IMR-90 (cell line): ENCODE measurements at regions of chr22 and their contacts with region 1.

Region 1: GRCh38 chr22:33000342-33001280 is 57.6 kb downstream of the SYN3 start:
- DNase-seq: peak; percentile 32
- ATAC-seq: peak; percentile 99
- H3K4me3 ChIP-seq: no peak overlapping the region
- H3K27ac ChIP-seq: no peak overlapping the region
- H3K4me1 ChIP-seq: no peaks in the 10 kb centered on the region
- H3K27me3 ChIP-seq: peaks cover 20% of the 10 kb centered on the region
- CTCF ChIP-seq: peak; percentile 89
- POLR2A ChIP-seq: no peak
- RAD21 ChIP-seq: peak; percentile 88

Region 2: GRCh38 chr22:31977141-31977841 is 1023.3 kb before region 1 on chr22:
- CTCF ChIA-PET with region 1: interaction called, 5 read pairs
- POLR2A ChIA-PET with region 1: no interaction called
- dilution Hi-C with region 1: no loop called
- in situ Hi-C with region 1: no loop called
- intact Hi-C with region 1: loop called (anchors 2 kb)
- DNase-seq: peak; percentile 54
- ATAC-seq: peak; percentile 95
- H3K4me3 ChIP-seq: no peak overlapping the region
- H3K27ac ChIP-seq: no peak overlapping the region
- H3K4me1 ChIP-seq: no peaks in the 10 kb centered on the region
- H3K27me3 ChIP-seq: peaks cover 2% of the 10 kb centered on the region; the same call in 1 of the 2 replicates
- CTCF ChIP-seq: peak; percentile 78
- POLR2A ChIP-seq: 0 out of 2 replicates have a peak, but pooled peaks have one; percentile 38
- RAD21 ChIP-seq: peak; percentile 88

Region 3: GRCh38 chr22:32103658-32104315 is 896.8 kb before region 1 on chr22:
- CTCF ChIA-PET with region 1: no interaction called
- POLR2A ChIA-PET with region 1: no interaction called
- dilution Hi-C with region 1: no loop called
- in situ Hi-C with region 1: no loop called
- intact Hi-C with region 1: loop called (anchors 5 kb)
- DNase-seq: peak; percentile 3
- ATAC-seq: no peak
- H3K4me3 ChIP-seq: no peak overlapping the region
- H3K27ac ChIP-seq: no peak overlapping the region
- H3K4me1 ChIP-seq: no peaks in the 10 kb centered on the region
- H3K27me3 ChIP-seq: 0 out of 2 replicates have a peak, but pooled peaks cover 3% of the 10 kb centered on the region
- CTCF ChIP-seq: peak; percentile 37
- POLR2A ChIP-seq: no peak
- RAD21 ChIP-seq: peak; percentile 47

Region 4: DNA sequence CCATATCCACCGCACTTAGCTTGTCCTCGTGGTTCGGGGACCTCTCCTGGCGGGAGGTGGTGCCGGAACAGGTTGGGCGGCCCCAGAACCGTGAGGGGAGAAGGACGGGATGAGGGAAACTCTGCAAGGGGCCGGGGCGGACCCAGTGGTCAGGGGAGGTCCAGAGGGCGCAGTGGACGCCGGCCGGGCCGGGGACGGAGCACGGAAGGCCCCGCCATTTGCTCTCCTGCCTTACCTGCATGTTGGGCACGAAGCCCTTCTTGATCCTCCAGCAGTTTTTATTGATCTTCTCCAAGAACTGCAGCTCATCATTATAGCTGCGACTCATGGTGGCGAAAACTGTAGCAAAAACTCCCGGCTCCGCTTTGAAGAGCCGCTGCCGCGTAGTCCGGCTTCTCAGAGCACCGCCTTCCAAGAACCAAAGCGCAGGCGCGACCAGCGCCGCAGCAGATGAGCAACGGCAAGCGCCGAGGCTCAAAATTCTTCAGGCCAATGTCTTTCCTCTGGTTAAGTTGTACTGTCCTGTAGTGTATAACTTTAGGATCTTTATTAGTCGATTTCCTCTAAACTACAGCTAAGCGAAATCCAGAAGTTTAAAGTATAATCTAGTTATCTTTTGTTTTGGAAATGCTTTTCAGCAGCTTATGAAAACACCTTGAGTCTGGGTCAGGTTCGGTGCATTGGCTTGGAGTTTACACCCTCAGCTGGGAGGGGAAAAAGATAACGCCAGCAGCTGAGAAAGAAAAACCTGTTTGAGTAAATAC is 588.6 kb before region 1 on chr22 and contains the start of gene RTCB:
- CTCF ChIA-PET with region 1: no interaction called
- POLR2A ChIA-PET with region 1: no interaction called
- dilution Hi-C with region 1: no loop called
- in situ Hi-C with region 1: no loop called
- intact Hi-C with region 1: loop called (anchors 2 kb)
- DNase-seq: peak; percentile 93
- ATAC-seq: peak; percentile 94
- H3K4me3 ChIP-seq: peak within 1 kb of the TSS; percentile 78
- H3K27ac ChIP-seq: peak within 1 kb of the TSS; percentile 57
- H3K4me1 ChIP-seq: peaks cover 2% of the 10 kb centered on the region; the same call in 1 of the 2 replicates
- H3K27me3 ChIP-seq: no peaks in the 10 kb centered on the region; the same call in none of the 2 replicates
- CTCF ChIP-seq: no peak
- POLR2A ChIP-seq: peak; percentile 48; the same call in 1 of the 2 replicates
- RAD21 ChIP-seq: no peak
- total RNA-seq, gene RTCB: 213 and 240 TPM in 2 replicates

Region 5: DNA sequence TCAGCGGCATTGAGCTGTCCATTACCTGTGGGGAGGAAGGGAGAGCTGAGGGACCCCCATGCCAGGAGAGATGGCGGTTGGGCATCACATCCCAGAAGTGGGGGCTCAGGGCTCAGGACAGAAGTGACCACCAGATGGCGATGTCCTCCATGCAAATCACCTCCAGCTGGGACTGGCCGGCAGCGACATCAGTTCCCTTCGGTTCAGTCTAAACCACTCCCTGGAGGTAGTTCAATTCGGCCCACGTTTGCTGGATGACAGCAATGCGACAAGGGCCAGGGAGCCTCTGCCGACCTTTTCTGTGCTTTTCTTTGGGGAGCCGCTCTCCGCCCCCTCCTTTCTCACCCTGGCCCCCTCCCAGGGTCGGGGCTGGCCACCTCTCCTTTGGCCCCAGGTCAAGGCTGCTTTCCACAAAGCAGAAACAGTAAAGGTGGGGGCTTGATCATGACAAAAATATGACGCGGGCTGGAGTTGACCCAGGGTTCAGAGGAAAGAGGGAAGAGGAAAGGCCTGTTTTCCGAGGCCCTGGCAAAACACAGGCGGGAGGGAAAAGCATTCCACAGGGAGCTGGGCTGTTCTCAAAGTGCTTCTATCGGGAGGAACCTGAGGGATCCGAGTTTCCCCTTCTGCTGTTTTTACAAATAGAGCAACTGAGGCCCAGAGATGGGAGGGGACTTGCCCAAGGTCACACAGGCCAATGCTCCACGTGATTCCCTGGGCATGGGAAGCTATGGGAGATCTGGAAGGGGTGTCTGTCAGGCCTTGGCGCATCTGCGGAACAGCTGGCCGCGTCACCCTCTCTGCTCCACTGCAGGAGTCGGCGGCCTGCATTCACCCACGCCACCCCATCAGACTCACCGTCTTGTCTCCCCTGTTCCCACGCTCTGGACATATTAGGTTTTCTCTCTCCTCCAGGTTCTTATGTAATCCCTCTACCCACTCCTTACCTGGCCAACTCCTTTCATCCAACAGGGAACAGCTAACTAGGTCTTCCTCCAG is 471.3 kb before region 1 on chr22:
- CTCF ChIA-PET with region 1: no interaction called
- POLR2A ChIA-PET with region 1: no interaction called
- dilution Hi-C with region 1: no loop called
- in situ Hi-C with region 1: no loop called
- intact Hi-C with region 1: loop called (anchors 1 kb)
- DNase-seq: peak; percentile 86
- ATAC-seq: peak; percentile 78
- H3K4me3 ChIP-seq: no peak overlapping the region
- H3K27ac ChIP-seq: peak overlapping the region; percentile 1; the same call in 1 of the 2 replicates
- H3K4me1 ChIP-seq: peaks cover 23% of the 10 kb centered on the region
- H3K27me3 ChIP-seq: no peaks in the 10 kb centered on the region
- CTCF ChIP-seq: peak; percentile 95
- POLR2A ChIP-seq: peak; percentile 67
- RAD21 ChIP-seq: peak; percentile 100

Region 6: DNA sequence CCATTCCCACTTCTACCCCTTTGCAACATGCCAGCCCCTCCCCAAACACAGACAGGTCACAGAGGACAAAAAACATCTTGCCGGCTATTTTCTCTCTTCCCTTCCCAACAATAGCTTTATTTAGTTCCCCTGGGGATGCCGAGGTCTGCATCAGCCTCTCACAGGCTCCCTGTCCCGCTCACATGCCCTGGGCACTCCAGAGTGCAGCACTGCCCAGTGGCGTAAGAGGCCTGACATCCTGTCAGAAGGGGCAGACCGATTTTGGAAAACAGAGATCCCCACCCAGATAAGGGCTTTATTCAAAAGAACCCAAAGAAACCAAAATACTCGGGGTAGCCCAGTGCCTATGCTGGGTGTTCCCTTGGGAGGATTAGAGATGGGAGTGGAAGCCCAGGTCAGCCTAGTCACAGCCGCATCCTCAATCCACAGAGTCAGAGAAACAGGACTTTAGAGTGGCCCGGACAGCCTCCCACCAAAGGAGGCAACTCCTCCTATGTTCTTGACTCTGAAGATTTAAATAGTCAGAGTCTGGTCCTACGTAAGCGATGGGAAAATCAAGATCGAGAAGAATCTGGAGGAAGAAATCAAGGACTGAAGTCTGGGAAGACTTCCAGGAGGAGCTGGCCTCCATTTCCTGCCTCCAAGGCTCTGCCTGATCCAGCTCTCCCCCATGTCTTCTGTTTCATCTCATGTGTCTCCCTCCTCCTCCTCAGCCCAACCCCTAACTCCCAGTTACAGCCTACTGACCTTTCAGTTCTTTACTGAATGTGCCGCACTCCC is 396.8 kb before region 1 on chr22:
- CTCF ChIA-PET with region 1: no interaction called
- POLR2A ChIA-PET with region 1: no interaction called
- dilution Hi-C with region 1: no loop called
- in situ Hi-C with region 1: no loop called
- intact Hi-C with region 1: no loop called
- DNase-seq: no peak
- ATAC-seq: no peak
- H3K4me3 ChIP-seq: no peak overlapping the region
- H3K27ac ChIP-seq: no peak overlapping the region
- H3K4me1 ChIP-seq: peaks cover 8% of the 10 kb centered on the region; the same call in 1 of the 2 replicates
- H3K27me3 ChIP-seq: no peaks in the 10 kb centered on the region
- CTCF ChIP-seq: no peak
- POLR2A ChIP-seq: no peak
- RAD21 ChIP-seq: no peak

Region 7: GRCh38 chr22:32660292-32660691 is 340.3 kb before region 1 on chr22:
- CTCF ChIA-PET with region 1: no interaction called
- POLR2A ChIA-PET with region 1: no interaction called
- dilution Hi-C with region 1: no loop called
- in situ Hi-C with region 1: no loop called
- intact Hi-C with region 1: loop called (anchors 1 kb)
- DNase-seq: peak; percentile 70
- ATAC-seq: peak; percentile 23; the same call in 1 of the 2 replicates
- H3K4me3 ChIP-seq: no peak overlapping the region
- H3K27ac ChIP-seq: no peak overlapping the region
- H3K4me1 ChIP-seq: peaks cover 14% of the 10 kb centered on the region
- H3K27me3 ChIP-seq: no peaks in the 10 kb centered on the region
- CTCF ChIP-seq: peak; percentile 70
- POLR2A ChIP-seq: no peak
- RAD21 ChIP-seq: peak; percentile 88

Region 8: DNA sequence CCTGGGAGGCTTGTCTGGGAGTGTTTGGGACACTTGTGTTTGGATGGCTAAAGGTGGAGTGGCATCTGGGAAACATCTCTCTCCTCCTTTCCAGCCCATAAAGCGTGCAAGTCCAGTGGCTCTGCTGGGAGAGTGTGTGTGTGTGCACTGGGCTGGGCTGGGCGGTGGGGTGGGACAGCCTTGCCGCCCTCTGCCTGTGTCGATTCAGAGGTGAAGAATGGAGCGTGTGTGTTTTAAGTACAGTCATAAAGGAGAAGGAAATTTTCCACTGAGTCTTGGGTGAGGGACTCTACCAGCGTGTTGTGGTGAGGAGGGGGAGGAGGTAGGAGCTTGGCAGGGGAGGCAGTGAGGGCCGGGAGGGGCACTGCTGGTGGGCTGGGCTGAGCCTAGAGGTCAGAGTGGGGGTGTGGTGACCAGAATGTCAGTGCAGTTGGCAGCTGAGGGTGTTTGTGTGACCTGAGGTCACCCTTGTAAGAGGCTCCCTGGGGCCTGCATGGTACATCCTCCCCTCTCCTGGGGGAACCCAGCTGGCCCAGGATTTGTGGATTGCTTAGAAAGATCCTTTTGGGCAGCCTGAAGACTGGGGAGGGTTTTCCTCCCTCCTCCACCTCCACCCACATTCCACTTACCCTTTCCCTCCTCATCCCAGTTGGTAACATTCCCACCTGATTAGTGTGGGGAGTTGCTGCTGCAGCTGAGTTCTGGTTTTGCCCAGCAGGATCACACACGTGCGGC is 197.4 kb before region 1 on chr22:
- CTCF ChIA-PET with region 1: no interaction called
- POLR2A ChIA-PET with region 1: no interaction called
- dilution Hi-C with region 1: no loop called
- in situ Hi-C with region 1: no loop called
- intact Hi-C with region 1: loop called (anchors 2 kb)
- DNase-seq: peak; percentile 70
- ATAC-seq: peak; percentile 27
- H3K4me3 ChIP-seq: peak overlapping the region; percentile 75
- H3K27ac ChIP-seq: peak overlapping the region; percentile 56
- H3K4me1 ChIP-seq: peaks cover 16% of the 10 kb centered on the region
- H3K27me3 ChIP-seq: no peaks in the 10 kb centered on the region
- CTCF ChIP-seq: no peak
- POLR2A ChIP-seq: peak; percentile 48; the same call in 1 of the 2 replicates
- RAD21 ChIP-seq: peak; percentile 12; the same call in 1 of the 2 replicates

Region 9: DNA sequence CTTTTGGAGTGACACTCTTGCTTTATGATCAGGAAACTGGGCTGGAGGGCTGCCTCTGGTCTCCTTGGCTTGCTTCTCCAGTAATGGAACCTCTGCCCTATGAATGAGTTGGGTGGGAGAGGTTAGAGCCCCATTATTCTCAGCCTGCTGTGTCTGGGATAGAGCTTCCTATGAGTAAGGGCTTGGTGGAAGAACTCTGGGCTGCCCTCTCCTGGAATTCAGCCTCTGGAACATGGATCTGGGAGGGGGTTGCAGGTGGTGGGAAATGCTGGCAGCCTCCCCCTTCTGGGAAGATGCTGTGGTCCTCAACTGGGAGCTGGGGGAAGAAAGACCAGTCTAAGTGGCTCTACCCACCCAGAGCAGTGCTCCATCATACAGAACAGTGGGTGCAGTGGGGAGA is 139.3 kb after region 1 on chr22:
- CTCF ChIA-PET with region 1: no interaction called
- POLR2A ChIA-PET with region 1: no interaction called
- dilution Hi-C with region 1: no loop called
- in situ Hi-C with region 1: no loop called
- intact Hi-C with region 1: no loop called
- DNase-seq: no peak
- ATAC-seq: no peak
- H3K4me3 ChIP-seq: no peak overlapping the region
- H3K27ac ChIP-seq: no peak overlapping the region
- H3K4me1 ChIP-seq: no peaks in the 10 kb centered on the region
- H3K27me3 ChIP-seq: no peaks in the 10 kb centered on the region
- CTCF ChIP-seq: no peak
- POLR2A ChIP-seq: no peak
- RAD21 ChIP-seq: no peak